ENCODE measurements at regions of chr6 and their contacts with region 1.

Region 1: GRCh38 chr6:147285087-147285855 is 81.1 kb downstream of the STXBP5 start:
- DNase-seq: no peak
- H3K4me3 Mint-ChIP-seq: no peak overlapping the region
- H3K27ac Mint-ChIP-seq: peak overlapping the region; percentile 11
- H3K4me1 Mint-ChIP-seq: peaks cover 43% of the 10 kb centered on the region
- H3K27me3 Mint-ChIP-seq: no peaks in the 10 kb centered on the region

Region 2: DNA sequence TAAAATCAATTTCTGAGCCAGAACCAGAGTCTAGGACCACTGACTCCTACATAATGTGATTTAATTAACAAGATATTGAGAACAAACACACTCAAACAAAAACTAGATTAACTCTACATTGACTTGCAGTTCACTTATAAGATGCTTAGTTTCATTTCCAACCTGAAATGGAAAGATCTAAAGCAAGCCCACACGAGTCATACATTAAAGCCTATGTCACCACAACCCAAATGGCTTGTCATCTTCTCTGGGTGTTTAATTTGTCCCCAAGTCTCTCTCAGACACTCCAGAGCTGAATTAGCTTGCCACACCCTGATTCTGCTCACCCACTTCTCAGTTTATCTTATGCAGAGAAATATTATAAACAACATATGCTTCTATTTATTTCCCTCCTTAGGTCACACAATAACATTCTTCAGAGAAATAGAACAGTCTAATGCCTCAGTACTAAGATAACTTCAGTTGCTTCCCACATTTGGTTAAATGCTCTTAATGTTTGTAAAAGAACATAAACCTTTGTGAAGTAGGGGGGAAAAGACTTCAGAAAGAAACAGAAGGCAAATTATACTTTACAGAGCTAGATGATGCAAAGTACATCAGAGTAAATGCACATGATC is 1461.8 kb before region 1 on chr6:
- intact Hi-C with region 1: loop called (anchors 5 kb)
- DNase-seq: no peak
- H3K4me3 Mint-ChIP-seq: no peak overlapping the region
- H3K27ac Mint-ChIP-seq: peak overlapping the region; percentile 59
- H3K4me1 Mint-ChIP-seq: peaks cover 46% of the 10 kb centered on the region
- H3K27me3 Mint-ChIP-seq: no peaks in the 10 kb centered on the region

Region 3: DNA sequence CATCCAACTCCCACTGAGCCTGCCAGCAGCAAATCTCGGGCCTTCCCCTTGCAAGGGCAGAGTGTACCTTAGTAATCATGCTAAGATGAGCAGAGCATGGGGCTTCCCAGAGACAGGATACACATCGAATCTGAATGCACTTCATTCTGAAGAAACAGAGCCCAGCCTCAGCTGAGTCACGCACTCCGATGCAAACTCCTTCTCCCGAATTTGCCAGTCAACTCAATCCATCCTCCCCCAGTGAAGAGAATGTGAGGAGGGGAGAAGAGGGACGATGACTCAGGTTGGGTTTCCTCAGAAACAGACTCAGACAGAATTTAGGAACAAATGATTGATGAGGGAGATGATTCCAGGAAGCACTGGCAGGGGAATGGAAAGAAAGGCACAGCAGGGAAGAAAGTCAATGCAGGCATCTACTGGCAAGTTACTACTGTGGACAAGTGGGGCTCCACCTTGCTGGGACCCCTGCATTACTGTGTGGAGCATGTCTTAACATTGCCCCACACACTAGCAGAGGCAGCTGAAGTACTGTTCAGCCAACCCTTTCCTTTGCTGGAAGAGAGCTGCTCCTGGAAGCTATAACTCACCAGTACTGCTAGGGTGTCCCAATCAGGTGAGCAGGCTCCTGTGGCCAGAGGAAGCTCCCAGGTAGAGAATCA is 434.9 kb before region 1 on chr6:
- intact Hi-C with region 1: loop called (anchors 1 kb)
- DNase-seq: no peak
- H3K4me3 Mint-ChIP-seq: no peak overlapping the region
- H3K27ac Mint-ChIP-seq: peak overlapping the region; percentile 61
- H3K4me1 Mint-ChIP-seq: peaks cover 39% of the 10 kb centered on the region
- H3K27me3 Mint-ChIP-seq: no peaks in the 10 kb centered on the region

Region 4: GRCh38 chr6:147202516-147203312 is 82.6 kb before region 1 on chr6:
- intact Hi-C with region 1: loop called (anchors 1 kb)
- DNase-seq: peak; percentile 77
- H3K4me3 Mint-ChIP-seq: peak overlapping the region; percentile 89
- H3K27ac Mint-ChIP-seq: peak overlapping the region; percentile 98
- H3K4me1 Mint-ChIP-seq: peaks cover 39% of the 10 kb centered on the region
- H3K27me3 Mint-ChIP-seq: no peaks in the 10 kb centered on the region

Region 5: DNA sequence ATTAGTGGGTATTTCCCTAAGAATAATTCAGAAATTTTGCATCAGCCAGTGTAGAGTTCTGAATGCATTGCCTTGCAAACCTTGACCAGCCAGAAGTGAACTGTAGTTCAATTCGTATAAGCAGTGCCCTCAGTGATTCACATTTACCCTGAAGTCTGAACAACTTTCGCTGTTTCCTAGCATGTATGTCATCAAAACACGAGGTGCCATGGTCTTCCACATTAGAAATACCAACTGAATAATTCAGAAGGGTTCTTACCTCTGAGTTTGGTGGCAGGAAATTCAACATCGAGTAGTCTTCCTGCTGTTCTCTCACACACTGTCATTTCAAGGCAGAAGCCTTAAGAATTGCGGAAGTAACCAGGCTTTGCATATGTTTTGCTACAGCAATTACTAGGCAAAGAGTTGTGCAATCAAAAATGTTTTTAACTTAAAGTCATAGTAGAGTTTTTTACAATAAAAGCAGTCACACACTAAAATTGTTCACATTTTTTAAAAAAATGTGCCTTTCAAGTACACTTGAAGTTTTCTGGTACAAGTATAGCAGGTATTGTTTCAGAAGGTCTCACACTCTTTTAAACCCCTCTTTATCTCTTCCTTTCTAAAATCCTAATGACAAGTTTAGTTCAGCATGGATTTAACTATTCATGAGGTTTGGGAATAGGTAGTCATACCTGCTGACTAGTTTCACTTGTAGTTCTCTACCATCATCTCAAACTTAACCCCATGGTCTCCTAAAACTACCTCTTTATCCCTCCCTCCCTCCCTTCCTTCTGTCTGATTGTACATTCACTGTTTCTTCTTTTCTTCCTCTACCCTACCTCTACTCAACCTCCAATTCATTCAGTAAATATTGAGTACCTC is 37.3 kb after region 1 on chr6:
- intact Hi-C with region 1: loop called (anchors 1 kb)
- DNase-seq: peak; percentile 17
- H3K4me3 Mint-ChIP-seq: peak overlapping the region; percentile 66
- H3K27ac Mint-ChIP-seq: peak overlapping the region; percentile 87
- H3K4me1 Mint-ChIP-seq: peaks cover 18% of the 10 kb centered on the region
- H3K27me3 Mint-ChIP-seq: no peaks in the 10 kb centered on the region

Measured in activated T-helper 1 cell treated with anti-CD3 and anti-CD28 coated beads, Interleukin-12 subunit alpha, Interleukin-12 subunit beta, Interleukin-2, Interleukin-4 antibody, amounts not matched to agents 30 ng/mL and 10 ng/mL and 1 ng/mL, durations not matched to agents 14 hours and 24 hours and 36 hours (primary cell).